ENCODE measurements at regions of chr21 and their contacts with region 1.

Region 1: DNA sequence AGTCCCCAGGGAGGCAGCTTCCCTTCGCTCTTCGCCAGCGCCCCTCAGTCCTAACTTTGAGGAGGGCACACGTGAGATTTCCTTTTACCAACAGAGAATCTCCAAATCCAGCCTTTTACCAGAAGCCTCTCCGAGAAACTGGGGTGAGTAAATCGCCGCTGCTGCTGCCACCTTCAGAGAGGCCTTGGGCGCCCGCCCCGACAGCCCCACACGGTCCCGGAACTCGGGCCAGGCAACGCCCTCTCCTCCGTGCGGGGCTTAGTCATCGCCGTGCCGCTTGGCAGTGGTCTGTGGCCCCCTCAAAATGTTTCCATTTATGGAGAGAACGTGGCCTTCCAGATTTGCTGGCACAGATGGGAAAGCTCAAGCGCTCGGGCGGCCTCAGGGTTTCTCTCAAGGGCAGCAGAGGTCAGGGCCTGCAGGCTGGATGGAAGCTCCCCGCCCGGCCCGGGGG is 41.4 kb upstream of the COL6A2 start:
- DNase-seq: peak; percentile 74
- H3K4me3 ChIP-seq: no peak overlapping the region
- H3K27ac ChIP-seq: peak overlapping the region; percentile 83 to 95 (median 92)
- H3K4me1 ChIP-seq: peaks cover 10 to 42% (median 21%) of the 10 kb centered on the region in 4 donors
- H3K27me3 ChIP-seq: no peaks in the 10 kb centered on the region
- CTCF ChIP-seq: no peak
- EP300 ChIP-seq: peak; percentile 85
- POLR2A ChIP-seq: peak; percentile 53

Region 2: GRCh38 chr21:45981151-45982089 is 75.1 kb before region 1 on chr21 and contains the start of gene COL6A1:
- in situ Hi-C with region 1: no loop called
- intact Hi-C with region 1: loop called (anchors 2 kb)
- DNase-seq: peak; percentile 73
- H3K4me3 ChIP-seq: peak within 1 kb of the TSS; percentile 42 to 73 (median 48)
- H3K27ac ChIP-seq: peak within 1 kb of the TSS; percentile 87 to 96 (median 90)
- H3K4me1 ChIP-seq: peaks cover 8 to 53% (median 21%) of the 10 kb centered on the region in 4 donors
- H3K27me3 ChIP-seq: peaks cover 42% of the 10 kb centered on the region
- CTCF ChIP-seq: no peak
- EP300 ChIP-seq: no peak
- POLR2A ChIP-seq: peak; percentile 43
- total RNA-seq, gene COL6A1: 166 to 580 (median 346) TPM

Region 3: DNA sequence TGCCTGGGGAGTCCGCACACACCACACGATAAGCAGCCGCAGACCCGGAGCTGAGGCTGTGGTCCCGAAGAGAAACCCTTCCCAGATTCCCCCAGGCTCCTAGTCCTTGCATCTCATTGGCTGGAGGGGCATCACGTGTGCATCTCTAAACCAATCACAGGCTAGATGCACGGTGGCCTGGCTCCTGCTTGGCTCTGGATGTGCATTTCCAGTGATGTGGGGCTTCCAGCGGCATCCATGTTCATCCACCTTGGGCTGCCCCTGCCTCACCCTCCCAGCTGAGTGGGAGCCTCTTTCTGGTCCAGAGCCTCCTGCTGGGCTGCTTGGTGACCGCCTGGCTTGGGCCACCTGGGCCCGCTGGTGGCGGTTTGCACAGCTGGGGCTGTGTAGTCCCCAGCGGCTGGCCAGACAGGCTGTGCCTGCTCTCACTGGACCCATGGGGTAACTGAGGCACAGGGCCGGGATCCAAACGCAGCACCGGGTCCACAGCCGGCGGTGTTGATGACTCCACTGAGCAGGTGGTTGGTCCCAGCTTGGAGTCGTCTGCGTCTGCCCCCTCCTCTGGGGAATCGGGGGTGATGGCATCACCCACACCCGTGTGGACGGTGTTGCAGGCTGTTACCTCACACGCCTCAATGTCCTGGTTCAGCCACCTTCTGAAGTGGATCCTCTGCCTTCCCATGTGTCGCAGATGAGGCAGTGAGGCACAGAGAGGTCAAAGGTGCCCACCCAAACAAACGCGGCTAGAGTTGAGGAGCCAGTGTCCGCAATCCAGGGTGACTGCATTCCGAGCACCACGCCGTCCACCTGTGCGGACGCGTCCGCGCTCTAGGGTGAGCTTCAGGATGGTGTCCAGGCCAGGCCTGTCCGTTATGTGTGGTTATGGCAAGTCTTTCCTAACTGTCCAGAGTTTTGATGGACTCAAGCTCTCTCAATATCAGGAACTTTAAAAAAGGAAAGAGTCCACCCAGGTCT is 33.6 kb before region 1 on chr21:
- in situ Hi-C with region 1: no loop called
- intact Hi-C with region 1: loop called (anchors 2 kb)
- DNase-seq: no peak
- H3K4me3 ChIP-seq: no peak overlapping the region
- H3K27ac ChIP-seq: peak overlapping the region; percentile 82 to 90 (median 86)
- H3K4me1 ChIP-seq: peaks cover 15 to 52% (median 16%) of the 10 kb centered on the region in 4 donors
- H3K27me3 ChIP-seq: no peaks in the 10 kb centered on the region
- CTCF ChIP-seq: no peak
- EP300 ChIP-seq: no peak
- POLR2A ChIP-seq: no peak

Region 4: DNA sequence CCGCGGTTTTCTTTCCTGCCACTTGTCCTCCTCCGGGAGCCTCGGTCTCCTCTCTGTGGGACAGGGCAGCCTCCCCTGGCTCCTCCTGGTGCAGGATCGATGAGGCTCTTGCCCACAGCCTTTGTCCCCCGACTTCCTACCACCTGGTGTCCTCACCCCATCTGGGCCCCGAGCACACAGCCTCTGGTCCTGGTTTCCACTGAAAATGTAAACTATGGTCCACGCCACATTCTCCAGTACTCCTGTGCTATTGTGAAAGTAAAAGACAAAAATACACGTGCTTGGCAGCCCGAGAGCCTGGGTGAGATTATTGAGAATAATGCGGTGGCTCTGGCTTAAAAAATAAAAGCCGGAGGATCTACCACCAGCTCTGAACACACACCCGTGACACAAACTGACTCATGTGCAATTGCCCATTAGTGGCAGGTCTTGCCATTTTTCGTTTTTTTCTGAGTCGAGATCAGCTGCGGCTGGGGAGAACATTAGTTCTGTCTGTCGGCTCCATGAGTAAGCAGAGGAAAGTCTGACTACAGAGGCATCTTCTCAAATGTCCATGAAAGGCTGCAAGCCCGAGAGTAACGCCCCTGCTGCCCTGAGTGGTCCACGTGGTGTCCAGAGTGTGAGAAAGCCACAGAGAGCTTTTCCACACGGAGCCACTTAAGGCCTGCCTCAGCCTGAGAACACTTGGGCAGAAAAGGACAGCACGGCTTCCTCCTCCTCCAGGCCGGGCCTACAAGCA is 35.7 kb after region 1 on chr21:
- in situ Hi-C with region 1: no loop called
- intact Hi-C with region 1: loop called (anchors 5 kb)
- DNase-seq: peak; percentile 64
- H3K4me3 ChIP-seq: no peak overlapping the region
- H3K27ac ChIP-seq: peak overlapping the region; percentile 89 to 98 (median 94)
- H3K4me1 ChIP-seq: peaks cover 12 to 22% (median 19%) of the 10 kb centered on the region in 4 donors
- H3K27me3 ChIP-seq: peaks cover 2% of the 10 kb centered on the region
- CTCF ChIP-seq: no peak
- EP300 ChIP-seq: no peak
- POLR2A ChIP-seq: peak; percentile 50